Ovary (tissue), 10 donors: ENCODE measurements at regions of chr14 and their contacts with region 1.

Region 1: GRCh38 chr14:57182760-57183503 is 85.8 kb downstream of the EXOC5 start:
- DNase-seq: peak; percentile 13 to 56 (median 36)
- H3K4me3 ChIP-seq: no peak overlapping the region
- H3K27ac ChIP-seq: peak overlapping the region in 1 of 2 donors; percentile 14
- H3K4me1 ChIP-seq: peaks cover 3% of the 10 kb centered on the region
- H3K27me3 ChIP-seq: no peaks in the 10 kb centered on the region
- CTCF ChIP-seq: no peak
- EP300 ChIP-seq: no peak
- POLR2A ChIP-seq: no peak

Region 2: DNA sequence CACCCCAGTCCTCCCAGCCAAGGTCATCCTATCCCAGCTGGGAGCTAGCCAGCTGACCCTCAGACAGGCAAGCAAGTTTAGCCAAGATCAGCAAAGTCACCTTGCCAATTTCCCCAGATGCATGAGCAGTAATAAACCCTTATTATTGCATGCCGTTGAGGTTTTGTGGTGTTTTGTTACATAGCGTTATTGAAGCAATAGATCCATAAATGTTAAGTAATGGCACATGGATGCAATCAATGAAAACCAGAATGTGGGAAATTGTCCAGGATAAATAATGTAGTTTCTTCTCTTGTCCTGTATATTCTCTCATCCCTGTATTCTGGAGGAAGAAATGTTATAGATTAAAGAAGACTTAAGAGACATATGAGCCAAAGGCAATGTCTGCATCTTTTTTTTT is 621.3 kb before region 1 on chr14:
- intact Hi-C with region 1: loop called in 1 of 4 experiments (anchors 10 kb)
- DNase-seq: no peak
- H3K4me3 ChIP-seq: no peak overlapping the region
- H3K27ac ChIP-seq: no peak overlapping the region
- H3K4me1 ChIP-seq: no peaks in the 10 kb centered on the region
- H3K27me3 ChIP-seq: no peaks in the 10 kb centered on the region
- CTCF ChIP-seq: no peak
- EP300 ChIP-seq: no peak
- POLR2A ChIP-seq: no peak

Region 3: DNA sequence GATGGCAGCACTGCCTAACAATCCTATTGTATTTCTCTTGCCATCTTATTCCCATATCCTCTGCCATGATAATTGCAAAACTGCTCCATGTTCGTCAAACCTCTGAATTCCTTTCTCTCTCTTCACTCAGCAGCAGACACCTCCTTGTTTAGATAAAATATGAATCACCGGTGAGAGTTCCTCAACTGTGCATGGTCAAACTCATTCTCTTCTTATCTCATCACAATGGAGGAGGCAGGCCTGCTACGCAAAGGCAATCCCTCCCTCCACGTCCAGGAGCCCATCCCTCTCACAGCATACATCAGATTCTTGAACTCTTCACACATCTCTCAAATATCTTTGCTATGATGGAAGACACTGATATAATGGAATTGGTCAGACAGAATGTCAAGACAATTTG is 1915.4 kb after region 1 on chr14:
- intact Hi-C with region 1: loop called in 1 of 4 experiments (anchors 5 kb)
- DNase-seq: no peak
- H3K4me3 ChIP-seq: no peak overlapping the region
- H3K27ac ChIP-seq: no peak overlapping the region
- H3K4me1 ChIP-seq: no peaks in the 10 kb centered on the region
- H3K27me3 ChIP-seq: no peaks in the 10 kb centered on the region
- CTCF ChIP-seq: no peak
- EP300 ChIP-seq: no peak
- POLR2A ChIP-seq: no peak